H1 (cell line): ENCODE measurements at regions of chr9 and their contacts with region 1.

Region 1: GRCh38 chr9:129093421-129094204 is 12.7 kb downstream of the DOLPP1 start:
- DNase-seq: no peak
- H3K4me3 ChIP-seq: no peak overlapping the region
- H3K27ac ChIP-seq: no peak overlapping the region; the same call in 1 of the 2 replicates
- H3K4me1 ChIP-seq: no peaks in the 10 kb centered on the region
- H3K27me3 ChIP-seq: no peaks in the 10 kb centered on the region
- CTCF ChIP-seq: no peak
- EP300 ChIP-seq: no peak
- POLR2A ChIP-seq: no peak
- RAD21 ChIP-seq: no peak

Region 2: DNA sequence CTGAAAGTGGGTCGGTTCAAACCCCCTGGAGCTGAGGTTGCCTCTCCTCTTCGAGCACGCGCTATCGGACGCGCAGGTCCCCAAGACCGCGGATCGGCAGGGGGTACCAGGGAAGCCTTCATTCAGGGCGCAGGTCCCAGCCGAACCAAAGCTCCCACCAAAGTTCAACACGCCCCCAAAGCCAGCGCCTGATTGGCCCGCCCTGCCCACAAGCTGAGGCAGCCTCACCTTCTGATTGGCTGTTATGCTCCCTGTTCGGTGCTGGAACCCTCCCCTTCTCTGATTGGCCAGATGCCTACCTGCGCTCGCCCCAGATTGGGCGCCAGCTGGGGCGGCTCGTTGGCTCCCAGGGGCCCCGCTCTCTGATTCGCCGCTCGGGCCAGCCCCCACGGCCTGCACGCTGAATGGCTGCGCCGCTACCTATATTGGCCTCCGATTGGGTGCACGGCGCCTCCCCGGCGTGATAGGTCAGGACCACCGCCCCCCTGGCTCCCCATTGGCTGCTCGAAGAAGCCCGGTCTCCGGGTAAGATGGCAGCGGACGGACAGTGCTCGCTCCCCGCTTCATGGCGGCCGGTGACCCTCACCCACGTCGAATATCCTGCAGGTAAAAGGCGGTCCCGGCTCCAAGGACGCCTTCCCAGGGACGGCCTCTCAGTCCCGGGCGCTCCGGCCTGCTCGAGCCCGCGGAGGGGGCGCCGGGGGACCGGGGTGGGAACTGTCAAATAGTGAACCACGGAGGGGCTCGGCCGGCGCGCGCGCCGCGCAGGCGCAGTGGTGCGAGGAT is 12.8 kb before region 1 on chr9 and contains the start of gene DOLPP1:
- CTCF ChIA-PET with region 1: interaction called, 4 read pairs
- POLR2A ChIA-PET with region 1: interaction called, 27 read pairs
- DNase-seq: peak; percentile 97 to 98
- H3K4me3 ChIP-seq: peak within 1 kb of the TSS; percentile 83 to 90 (median 86)
- H3K27ac ChIP-seq: peak within 1 kb of the TSS; percentile 56
- H3K4me1 ChIP-seq: peaks cover 0 to 9% (median 5%) of the 10 kb centered on the region in 4 experiments; a peak in 6 of 7 replicates
- H3K27me3 ChIP-seq: no peaks in the 10 kb centered on the region
- CTCF ChIP-seq: peak in 1 of 3 experiments; percentile 3; a peak in 1 of 4 replicates
- EP300 ChIP-seq: no peak
- POLR2A ChIP-seq: peak in 1 of 2 experiments; percentile 90; a peak in 2 of 3 replicates
- RAD21 ChIP-seq: no peak
- total RNA-seq, gene DOLPP1: 36.0 and 38.8 TPM in 2 replicates

Region 3: DNA sequence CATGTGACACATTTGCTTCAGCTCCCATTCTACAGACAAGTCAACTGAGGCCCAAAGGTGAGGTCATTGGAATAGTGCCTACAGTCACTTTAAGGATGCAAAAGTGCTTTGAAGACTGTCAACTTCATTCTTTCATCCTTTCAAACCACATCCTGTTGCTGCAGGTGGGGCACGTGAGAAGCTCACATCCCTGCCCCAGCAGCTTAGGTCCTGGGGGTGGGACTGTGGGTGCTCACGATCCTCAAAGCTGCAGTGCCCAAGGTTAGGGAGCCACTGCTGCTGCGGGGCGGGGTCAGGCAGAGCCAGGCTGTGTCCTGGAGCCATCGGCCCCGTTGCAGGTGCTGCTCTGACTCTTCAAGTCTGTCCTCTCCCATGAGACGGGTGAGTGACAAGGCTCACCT is 142.3 kb after region 1 on chr9:
- CTCF ChIA-PET with region 1: no interaction called
- POLR2A ChIA-PET with region 1: no interaction called
- DNase-seq: no peak
- H3K4me3 ChIP-seq: no peak overlapping the region
- H3K27ac ChIP-seq: no peak overlapping the region
- H3K4me1 ChIP-seq: peaks cover 0 to 13% (median 4%) of the 10 kb centered on the region in 4 experiments; a peak in 5 of 7 replicates
- H3K27me3 ChIP-seq: no peaks in the 10 kb centered on the region
- CTCF ChIP-seq: no peak
- EP300 ChIP-seq: no peak
- POLR2A ChIP-seq: no peak
- RAD21 ChIP-seq: no peak

Region 4: GRCh38 chr9:129247820-129248153 is 154.2 kb after region 1 on chr9:
- CTCF ChIA-PET with region 1: no interaction called
- POLR2A ChIA-PET with region 1: no interaction called
- DNase-seq: no peak
- H3K4me3 ChIP-seq: no peak overlapping the region
- H3K27ac ChIP-seq: no peak overlapping the region
- H3K4me1 ChIP-seq: peaks cover 0 to 7% (median 0%) of the 10 kb centered on the region in 4 experiments; a peak in 2 of 7 replicates
- H3K27me3 ChIP-seq: no peaks in the 10 kb centered on the region; a peak in 1 of 7 replicates
- CTCF ChIP-seq: no peak
- EP300 ChIP-seq: no peak
- POLR2A ChIP-seq: no peak
- RAD21 ChIP-seq: no peak